Activated CD4-positive, alpha-beta memory T cell treated with anti-CD3 and anti-CD28 coated beads for 36 hours (primary cell): ENCODE measurements at regions of chr1 and their contacts with region 1.

Region 1: DNA sequence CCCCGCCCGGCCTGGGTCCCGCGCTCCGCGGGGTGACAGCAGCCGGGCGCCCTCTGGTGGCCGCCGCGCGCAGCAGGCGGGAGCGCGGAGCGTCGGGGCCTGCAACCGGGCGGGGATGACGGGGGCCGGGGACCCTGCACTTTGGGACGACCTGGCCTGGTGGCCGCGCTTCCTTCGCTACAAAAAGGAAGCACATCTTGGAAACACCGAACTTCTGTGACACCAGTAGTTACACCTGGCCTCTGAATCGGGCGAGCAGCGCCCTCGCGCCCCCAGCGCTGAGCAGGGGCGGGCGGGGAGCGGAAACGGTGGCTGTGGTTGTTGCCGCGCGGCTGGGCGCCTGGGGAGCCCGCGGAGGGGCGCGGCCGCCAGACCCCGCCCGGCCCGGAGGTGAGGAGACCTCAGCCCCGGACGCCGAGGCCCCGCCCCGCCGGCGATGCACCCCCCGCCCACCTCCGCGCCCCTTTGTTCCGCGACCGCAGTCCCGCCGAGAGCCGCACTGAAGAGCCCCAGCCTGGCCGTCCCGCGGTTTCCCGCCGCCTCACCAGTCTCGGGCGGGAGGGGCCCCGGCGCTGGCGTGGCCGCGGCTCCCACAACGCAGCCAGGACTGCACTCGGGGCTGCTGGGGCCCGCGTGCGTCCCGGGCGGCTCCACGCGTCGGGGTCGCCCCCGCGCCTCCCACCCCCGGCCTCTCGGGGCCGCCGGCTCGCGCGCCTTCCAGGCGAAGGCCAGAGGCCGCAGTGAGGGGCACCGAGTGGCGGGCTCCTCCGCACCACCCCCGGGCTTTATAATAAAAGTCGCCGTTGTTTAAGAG is 59.3 kb downstream of the H3-3A start:
- DNase-seq: peak; percentile 78
- H3K4me3 Mint-ChIP-seq: peak overlapping the region; percentile 74
- H3K27ac Mint-ChIP-seq: peak overlapping the region; percentile 74
- H3K4me1 Mint-ChIP-seq: peaks cover 26% of the 10 kb centered on the region
- H3K27me3 Mint-ChIP-seq: no peaks in the 10 kb centered on the region

Region 2: GRCh38 chr1:225474986-225475820 is 646.6 kb before region 1 on chr1:
- CTCF ChIA-PET with region 1: no interaction called
- POLR2A ChIA-PET with region 1: no interaction called
- intact Hi-C with region 1: loop called (anchors 2 kb)
- DNase-seq: peak; percentile 77
- H3K4me3 Mint-ChIP-seq: no peak overlapping the region
- H3K27ac Mint-ChIP-seq: no peak overlapping the region
- H3K4me1 Mint-ChIP-seq: peaks cover 41% of the 10 kb centered on the region
- H3K27me3 Mint-ChIP-seq: no peaks in the 10 kb centered on the region

Region 3: DNA sequence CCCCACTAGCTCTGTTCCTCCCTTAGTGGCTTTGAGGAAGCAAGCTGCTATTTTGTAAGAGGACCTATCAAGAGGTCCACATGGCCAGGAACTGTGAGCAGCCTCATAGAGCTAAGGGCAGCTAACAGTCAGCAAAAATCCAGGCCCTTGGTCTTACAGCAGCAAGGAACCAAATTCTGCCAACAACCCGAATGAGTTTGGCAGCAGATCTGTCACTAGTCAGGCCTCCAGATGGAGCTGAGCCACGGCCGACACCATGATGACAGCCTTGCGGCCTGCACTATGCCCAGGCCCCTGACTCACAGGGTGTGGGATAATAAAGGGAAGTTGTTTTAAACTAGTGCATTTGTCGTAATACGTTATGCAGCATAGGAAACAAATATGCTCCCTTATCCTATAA is 87.3 kb before region 1 on chr1:
- CTCF ChIA-PET with region 1: no interaction called
- POLR2A ChIA-PET with region 1: no interaction called
- intact Hi-C with region 1: no loop called
- DNase-seq: no peak
- H3K4me3 Mint-ChIP-seq: no peak overlapping the region
- H3K27ac Mint-ChIP-seq: no peak overlapping the region
- H3K4me1 Mint-ChIP-seq: no peaks in the 10 kb centered on the region
- H3K27me3 Mint-ChIP-seq: no peaks in the 10 kb centered on the region

Region 4: DNA sequence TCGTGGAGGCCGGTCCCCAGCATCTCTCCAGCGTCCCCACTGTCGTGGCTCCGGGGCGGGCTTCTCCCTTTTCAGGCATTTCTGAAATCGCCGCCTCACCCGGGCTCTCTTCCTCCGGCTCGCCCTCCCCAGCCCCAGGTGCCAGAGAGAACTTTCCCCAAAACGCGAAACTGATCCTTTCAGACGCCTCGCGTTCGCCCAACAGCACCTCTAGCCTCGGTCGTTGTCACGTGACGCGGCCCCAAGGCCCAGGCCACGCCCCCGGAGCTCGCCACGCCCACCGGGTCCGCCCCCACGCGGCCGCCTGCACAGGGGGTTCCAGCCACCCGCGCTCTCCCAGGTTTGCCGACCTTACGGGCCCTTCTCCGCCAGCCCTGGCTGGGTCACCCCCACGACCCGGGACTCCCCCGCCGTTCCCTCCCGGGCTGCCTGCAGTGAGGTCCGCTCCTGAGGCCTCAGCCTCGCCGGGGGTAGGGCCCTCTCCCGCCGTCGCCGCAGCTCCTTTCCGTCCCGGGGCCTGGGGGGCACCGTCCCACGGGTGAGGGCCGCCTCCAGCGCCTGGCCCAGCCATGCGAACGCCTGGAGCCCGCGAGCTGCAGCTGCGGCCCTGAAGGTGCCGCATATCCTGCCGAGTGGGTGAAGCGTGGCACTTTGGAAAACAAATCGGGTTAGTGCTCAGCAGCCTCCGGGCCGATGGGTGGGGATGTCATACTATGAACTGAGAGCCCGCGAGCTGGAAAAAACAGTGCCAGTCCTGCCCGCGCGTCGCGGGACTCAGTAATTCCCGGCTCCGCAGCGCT is 38.3 kb before region 1 on chr1:
- CTCF ChIA-PET with region 1: interaction called, 12 read pairs
- POLR2A ChIA-PET with region 1: no interaction called
- intact Hi-C with region 1: loop called (anchors 2 kb)
- DNase-seq: peak; percentile 93
- H3K4me3 Mint-ChIP-seq: peak overlapping the region; percentile 86
- H3K27ac Mint-ChIP-seq: no peak overlapping the region
- H3K4me1 Mint-ChIP-seq: peaks cover 8% of the 10 kb centered on the region
- H3K27me3 Mint-ChIP-seq: no peaks in the 10 kb centered on the region

Region 5: DNA sequence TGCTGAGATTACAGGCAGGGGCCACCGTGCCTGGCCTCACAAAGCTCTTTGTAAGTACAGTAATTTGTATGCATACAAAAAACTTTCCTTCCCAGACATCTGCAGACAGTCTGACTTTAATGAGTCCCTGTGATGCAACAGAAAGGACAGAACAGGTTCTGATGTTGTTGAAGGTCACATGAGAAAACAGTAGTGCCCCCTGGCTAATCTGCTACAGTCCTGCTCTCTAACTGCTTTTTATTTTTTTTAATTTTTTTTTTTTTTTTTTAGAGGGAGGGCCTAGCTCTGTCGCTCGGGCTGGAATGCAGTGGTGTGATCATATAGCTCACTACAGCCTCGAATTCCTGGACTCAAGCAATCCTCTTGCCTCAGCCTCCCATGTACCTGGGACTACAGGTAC is 28.0 kb after region 1 on chr1:
- CTCF ChIA-PET with region 1: interaction called, 13 read pairs
- POLR2A ChIA-PET with region 1: no interaction called
- intact Hi-C with region 1: no loop called
- DNase-seq: no peak
- H3K4me3 Mint-ChIP-seq: no peak overlapping the region
- H3K27ac Mint-ChIP-seq: no peak overlapping the region
- H3K4me1 Mint-ChIP-seq: no peaks in the 10 kb centered on the region
- H3K27me3 Mint-ChIP-seq: no peaks in the 10 kb centered on the region

Region 6: GRCh38 chr1:226201029-226201593 is 79.3 kb after region 1 on chr1:
- CTCF ChIA-PET with region 1: interaction called, 259 read pairs
- POLR2A ChIA-PET with region 1: interaction called, 7 read pairs
- intact Hi-C with region 1: loop called (anchors 1 kb)
- DNase-seq: no peak
- H3K4me3 Mint-ChIP-seq: no peak overlapping the region
- H3K27ac Mint-ChIP-seq: no peak overlapping the region
- H3K4me1 Mint-ChIP-seq: peaks cover 2% of the 10 kb centered on the region
- H3K27me3 Mint-ChIP-seq: peaks cover 2% of the 10 kb centered on the region

Region 7: GRCh38 chr1:226407497-226408284 is 285.9 kb after region 1 on chr1 and contains the start of gene PARP1:
- CTCF ChIA-PET with region 1: interaction called, 12 read pairs
- POLR2A ChIA-PET with region 1: no interaction called
- intact Hi-C with region 1: loop called (anchors 5 kb)
- DNase-seq: peak; percentile 93
- H3K4me3 Mint-ChIP-seq: peak within 1 kb of the TSS; percentile 100
- H3K27ac Mint-ChIP-seq: peak within 1 kb of the TSS; percentile 98
- H3K4me1 Mint-ChIP-seq: peaks cover 37% of the 10 kb centered on the region
- H3K27me3 Mint-ChIP-seq: no peaks in the 10 kb centered on the region
- total RNA-seq, gene PARP1: 301 to 308 TPM